Right lobe of liver (tissue), 6 donors: ENCODE measurements at regions of chr2 and their contacts with region 1.

Region 1: GRCh38 chr2:20781656-20782265 is 41.1 kb downstream of the LDAH start:
- DNase-seq: no peak
- ATAC-seq: peak; percentile 79 to 86 (median 80)
- H3K4me3 ChIP-seq: no peak overlapping the region
- H3K27ac ChIP-seq: no peak overlapping the region
- H3K4me1 ChIP-seq: no peaks in the 10 kb centered on the region
- H3K27me3 ChIP-seq: no peaks in the 10 kb centered on the region
- CTCF ChIP-seq: peak; percentile 62 to 83 (median 78)
- POLR2A ChIP-seq: no peak

Region 2: DNA sequence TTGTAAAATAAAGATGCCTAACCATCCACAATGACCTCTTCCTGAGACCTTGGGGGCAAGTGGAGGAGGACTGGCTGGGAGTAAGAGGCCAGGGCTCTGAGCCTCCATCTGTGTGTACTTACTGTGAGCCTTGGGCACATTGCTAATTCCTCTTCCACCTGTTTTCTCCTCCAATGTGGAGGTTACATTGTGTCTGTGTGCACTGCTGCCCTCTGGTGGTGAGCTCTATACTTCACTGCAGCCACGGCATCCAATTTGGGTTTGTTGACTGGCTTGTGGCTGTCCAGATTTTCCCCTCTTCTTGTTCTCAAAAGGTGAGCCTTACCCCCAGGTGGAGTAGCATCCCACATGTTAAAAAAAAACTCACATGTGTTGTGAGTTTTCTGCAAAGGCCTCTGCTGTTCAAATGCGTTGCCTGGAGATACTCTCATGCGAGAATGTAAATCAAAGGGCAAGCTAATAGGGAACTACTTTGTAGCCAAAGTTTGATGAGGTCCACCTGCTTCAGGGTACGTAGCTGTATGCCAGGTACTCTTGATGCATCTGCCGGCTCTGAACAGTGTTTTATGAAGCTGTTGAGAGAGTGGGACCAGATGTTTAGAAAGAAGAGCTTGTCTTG is 181.3 kb after region 1 on chr2:
- intact Hi-C with region 1: loop called in 1 of 2 experiments (anchors 10 kb)
- DNase-seq: peak; percentile 65 to 76 (median 67)
- ATAC-seq: peak; percentile 91 to 97 (median 94)
- H3K4me3 ChIP-seq: no peak overlapping the region
- H3K27ac ChIP-seq: no peak overlapping the region
- H3K4me1 ChIP-seq: peaks cover 0 to 3% (median 0%) of the 10 kb centered on the region in 4 donors
- H3K27me3 ChIP-seq: no peaks in the 10 kb centered on the region
- CTCF ChIP-seq: peak; percentile 83 to 91 (median 86)
- POLR2A ChIP-seq: no peak